ENCODE measurements at regions of chr6 and their contacts with region 1.

Region 1: DNA sequence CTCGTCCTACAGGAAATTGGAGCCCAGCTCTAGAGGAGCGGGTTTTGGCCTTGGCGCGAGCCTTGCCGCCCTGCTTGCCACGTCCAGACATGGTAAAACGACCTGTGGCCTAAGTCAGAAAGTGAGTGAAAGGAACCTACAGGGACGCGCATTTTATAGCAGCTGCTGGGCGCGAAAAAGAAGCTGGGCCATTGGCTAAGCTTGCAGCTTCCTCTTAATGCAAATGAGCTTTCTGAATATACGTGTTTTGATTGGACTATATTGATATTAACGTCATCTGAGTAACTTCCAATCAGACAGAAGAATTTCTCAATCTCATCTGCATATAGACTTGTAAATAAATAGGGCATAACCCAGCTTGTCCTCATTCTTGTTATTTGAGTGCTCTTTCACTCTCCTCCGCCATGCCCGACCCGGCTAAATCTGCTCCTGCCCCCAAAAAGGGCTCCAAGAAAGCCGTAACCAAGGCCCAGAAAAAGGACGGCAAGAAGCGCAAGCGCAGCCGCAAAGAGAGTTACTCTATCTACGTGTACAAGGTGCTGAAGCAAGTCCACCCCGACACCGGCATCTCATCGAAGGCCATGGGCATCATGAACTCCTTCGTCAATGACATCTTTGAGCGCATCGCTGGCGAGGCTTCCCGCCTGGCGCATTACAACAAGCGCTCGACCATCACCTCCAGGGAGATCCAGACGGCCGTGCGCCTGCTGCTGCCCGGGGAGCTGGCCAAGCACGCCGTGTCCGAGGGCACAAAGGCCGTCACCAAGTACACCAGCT is 18.9 kb downstream of the OR2B2 start:
- DNase-seq: peak; percentile 82
- ATAC-seq: peak; percentile 55
- H3K4me3 Mint-ChIP-seq: no peak overlapping the region
- H3K27ac Mint-ChIP-seq: no peak overlapping the region
- H3K4me1 Mint-ChIP-seq: peaks cover 43% of the 10 kb centered on the region
- H3K27me3 Mint-ChIP-seq: no peaks in the 10 kb centered on the region

Region 2: DNA sequence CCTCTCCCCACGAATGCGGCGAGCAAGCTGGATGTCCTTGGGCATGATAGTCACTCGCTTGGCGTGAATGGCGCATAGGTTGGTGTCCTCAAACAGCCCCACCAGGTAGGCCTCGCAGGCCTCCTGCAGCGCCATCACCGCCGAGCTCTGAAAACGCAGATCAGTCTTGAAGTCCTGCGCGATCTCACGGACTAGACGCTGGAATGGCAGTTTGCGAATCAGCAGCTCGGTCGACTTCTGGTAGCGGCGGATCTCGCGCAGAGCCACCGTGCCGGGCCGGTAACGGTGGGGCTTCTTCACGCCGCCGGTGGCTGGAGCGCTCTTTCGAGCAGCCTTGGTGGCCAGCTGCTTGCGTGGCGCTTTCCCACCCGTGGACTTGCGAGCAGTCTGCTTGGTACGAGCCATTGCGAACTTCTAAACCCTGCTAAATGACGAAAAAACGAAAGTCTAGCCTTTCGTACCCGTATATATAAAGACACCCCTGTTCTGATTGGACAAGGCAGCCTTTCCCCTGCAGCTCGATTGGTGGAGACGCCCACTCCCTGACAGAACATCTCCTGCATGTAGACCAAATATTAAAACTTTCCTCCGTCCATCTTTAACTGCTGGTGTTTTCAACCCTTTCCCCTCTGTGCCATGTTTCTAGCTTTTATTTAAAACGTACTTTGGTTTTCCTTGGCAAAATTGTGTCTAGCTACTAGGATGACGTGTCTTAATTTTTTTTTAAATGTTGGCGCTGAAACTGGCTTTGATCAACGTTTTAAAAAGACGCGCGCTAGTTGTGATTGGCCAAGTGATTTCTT is 1696.2 kb before region 1 on chr6:
- POLR2A ChIA-PET with region 1: interaction called, 18 read pairs
- DNase-seq: peak; percentile 83
- ATAC-seq: peak; percentile 44
- H3K4me3 Mint-ChIP-seq: peak overlapping the region; percentile 87
- H3K27ac Mint-ChIP-seq: peak overlapping the region; percentile 96
- H3K4me1 Mint-ChIP-seq: peaks cover 48% of the 10 kb centered on the region
- H3K27me3 Mint-ChIP-seq: no peaks in the 10 kb centered on the region

Region 3: DNA sequence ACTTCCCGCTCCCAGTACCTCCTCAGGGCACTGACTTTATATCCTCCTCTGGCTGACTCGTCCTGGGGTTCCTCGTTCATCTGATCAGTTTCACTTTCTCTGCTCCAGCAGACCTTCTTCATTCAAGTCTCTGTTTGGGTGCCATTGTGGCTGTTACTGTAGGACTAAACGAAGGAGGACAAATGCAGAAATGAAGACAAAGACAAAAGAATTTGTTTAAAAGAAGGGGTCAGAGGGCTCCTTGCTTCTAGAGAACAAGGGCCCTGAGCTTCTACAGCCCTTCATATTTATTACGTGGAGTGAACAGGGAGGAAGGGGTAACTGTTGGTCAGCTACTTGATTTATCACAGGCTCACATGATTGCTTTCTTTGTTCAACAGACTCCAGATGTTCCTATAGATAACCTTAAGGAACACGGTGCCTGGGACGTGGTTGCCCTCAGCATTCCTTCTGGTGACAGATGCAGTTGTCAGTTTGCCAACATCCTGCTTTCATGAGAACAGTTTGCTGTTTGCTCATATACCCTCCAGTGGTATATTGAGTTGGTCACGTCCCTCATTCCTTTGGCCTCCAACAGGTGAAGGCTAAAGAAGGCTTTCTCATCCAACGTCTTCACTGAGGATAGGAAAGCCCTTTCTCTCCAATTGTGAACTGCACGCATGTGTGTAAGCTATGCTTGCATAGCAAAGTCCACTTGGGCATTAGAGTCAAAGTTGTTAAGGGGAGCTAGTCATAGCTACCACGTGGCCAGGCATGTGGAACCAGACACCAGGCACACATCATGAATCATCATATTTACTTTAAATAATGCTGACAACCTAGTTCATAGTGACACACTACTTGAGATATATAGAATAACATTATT is 1597.3 kb before region 1 on chr6:
- POLR2A ChIA-PET with region 1: no interaction called
- DNase-seq: no peak
- ATAC-seq: peak; percentile 54
- H3K4me3 Mint-ChIP-seq: peak overlapping the region; percentile 44
- H3K27ac Mint-ChIP-seq: peak overlapping the region; percentile 75
- H3K4me1 Mint-ChIP-seq: peaks cover 10% of the 10 kb centered on the region
- H3K27me3 Mint-ChIP-seq: no peaks in the 10 kb centered on the region

Region 4: GRCh38 chr6:27126815-27127537 is 766.3 kb before region 1 on chr6:
- POLR2A ChIA-PET with region 1: interaction called, 158 read pairs
- DNase-seq: peak; percentile 73
- ATAC-seq: peak; percentile 71
- H3K4me3 Mint-ChIP-seq: peak overlapping the region; percentile 80
- H3K27ac Mint-ChIP-seq: peak overlapping the region; percentile 84
- H3K4me1 Mint-ChIP-seq: peaks cover 43% of the 10 kb centered on the region
- H3K27me3 Mint-ChIP-seq: no peaks in the 10 kb centered on the region

Region 5: DNA sequence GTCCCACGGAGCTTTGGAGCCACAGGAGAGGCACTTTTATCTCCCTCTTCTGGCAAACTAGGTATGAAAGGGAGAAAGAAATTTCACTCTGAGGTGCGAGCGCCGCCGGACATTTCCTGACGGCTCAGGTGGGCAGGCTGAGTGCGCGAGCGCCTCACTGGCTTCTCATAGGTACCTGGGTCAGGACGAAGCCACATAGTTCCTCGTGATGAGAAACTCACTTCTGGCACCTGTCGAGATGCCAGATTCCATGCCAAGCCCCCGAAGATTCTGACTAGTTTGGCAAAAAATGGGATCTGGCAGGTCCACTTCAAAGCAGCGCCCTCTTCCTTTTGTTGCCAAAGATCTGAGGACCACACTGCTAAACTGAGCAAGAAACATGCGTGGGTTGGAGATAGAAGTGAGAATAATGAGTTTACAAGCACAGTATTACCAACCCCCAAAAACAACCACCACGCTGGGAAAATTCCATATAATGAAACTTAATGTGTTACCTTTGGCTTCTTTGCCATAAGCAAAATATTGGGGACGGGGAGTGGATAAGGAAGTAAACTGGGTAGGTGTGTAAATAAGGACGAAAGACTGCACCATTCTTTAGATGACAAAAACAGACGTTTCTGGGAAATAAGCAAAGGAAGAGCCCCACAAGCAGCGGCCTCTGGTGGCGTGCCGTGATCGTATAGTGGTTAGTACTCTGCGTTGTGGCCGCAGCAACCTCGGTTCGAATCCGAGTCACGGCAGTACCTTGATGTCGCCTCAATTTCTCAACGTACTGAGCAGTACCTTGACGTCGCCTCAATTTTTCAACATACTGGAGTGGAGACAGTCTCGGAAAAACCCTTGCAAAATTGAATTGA is 735.6 kb before region 1 on chr6:
- POLR2A ChIA-PET with region 1: interaction called, 17 read pairs
- DNase-seq: peak; percentile 78
- ATAC-seq: peak; percentile 80
- H3K4me3 Mint-ChIP-seq: peak overlapping the region; percentile 69
- H3K27ac Mint-ChIP-seq: peak overlapping the region; percentile 70
- H3K4me1 Mint-ChIP-seq: peaks cover 43% of the 10 kb centered on the region
- H3K27me3 Mint-ChIP-seq: no peaks in the 10 kb centered on the region

Region 6: GRCh38 chr6:27838058-27838944 is 54.9 kb before region 1 on chr6:
- POLR2A ChIA-PET with region 1: interaction called, 675 read pairs
- DNase-seq: peak; percentile 84
- ATAC-seq: peak; percentile 74
- H3K4me3 Mint-ChIP-seq: no peak overlapping the region
- H3K27ac Mint-ChIP-seq: no peak overlapping the region
- H3K4me1 Mint-ChIP-seq: peaks cover 26% of the 10 kb centered on the region
- H3K27me3 Mint-ChIP-seq: peaks cover 2% of the 10 kb centered on the region

Region 7: DNA sequence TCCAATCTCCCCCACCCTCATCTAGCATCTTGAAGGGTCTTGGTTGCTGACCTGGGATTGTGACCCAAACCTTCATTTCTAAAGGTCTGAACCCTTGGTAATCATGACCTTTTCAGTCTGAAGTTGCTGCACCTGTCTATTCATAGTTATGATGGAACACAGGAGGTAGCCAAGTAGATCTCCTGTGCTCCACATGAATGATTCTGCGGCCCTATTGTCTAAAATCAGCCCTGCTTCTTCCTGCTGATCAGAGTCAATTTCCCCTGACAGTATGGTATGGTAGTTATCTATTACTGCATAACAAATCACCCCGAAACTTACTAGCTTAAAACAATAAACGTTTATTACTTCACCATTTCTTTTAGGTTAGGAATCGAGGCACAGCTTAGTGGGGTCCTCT is 72.8 kb after region 1 on chr6:
- POLR2A ChIA-PET with region 1: no interaction called
- DNase-seq: no peak
- ATAC-seq: no peak
- H3K4me3 Mint-ChIP-seq: no peak overlapping the region
- H3K27ac Mint-ChIP-seq: no peak overlapping the region
- H3K4me1 Mint-ChIP-seq: no peaks in the 10 kb centered on the region
- H3K27me3 Mint-ChIP-seq: peaks cover 25% of the 10 kb centered on the region

Region 8: GRCh38 chr6:28880894-28881780 is 987.9 kb after region 1 on chr6:
- POLR2A ChIA-PET with region 1: interaction called, 18 read pairs
- DNase-seq: peak; percentile 64
- ATAC-seq: no peak
- H3K4me3 Mint-ChIP-seq: peak overlapping the region; percentile 84
- H3K27ac Mint-ChIP-seq: peak overlapping the region; percentile 81
- H3K4me1 Mint-ChIP-seq: peaks cover 29% of the 10 kb centered on the region
- H3K27me3 Mint-ChIP-seq: peaks cover 20% of the 10 kb centered on the region

Measured in activated naive CD8-positive, alpha-beta T cell treated with anti-CD3 and anti-CD28 coated beads, Interleukin-2, amount 10 ng/mL, durations not matched to agents 7 days and 5 days (primary cell).